Activated CD4-positive, alpha-beta T cell treated with anti-CD3 and anti-CD28 coated beads for 36 hours (primary cell): ENCODE measurements at regions of chr19 and their contacts with region 1.

Region 1: GRCh38 chr19:46661020-46661731 is at the start of gene DACT3:
- DNase-seq: peak; percentile 100
- ATAC-seq: peak; percentile 87
- H3K4me3 Mint-ChIP-seq: peak within 1 kb of the TSS; percentile 66
- H3K27ac Mint-ChIP-seq: peak within 1 kb of the TSS; percentile 62
- H3K4me1 Mint-ChIP-seq: peaks cover 28% of the 10 kb centered on the region
- H3K27me3 Mint-ChIP-seq: peaks cover 12% of the 10 kb centered on the region
- total RNA-seq, gene DACT3: 2.9 to 3.1 TPM

Region 2: DNA sequence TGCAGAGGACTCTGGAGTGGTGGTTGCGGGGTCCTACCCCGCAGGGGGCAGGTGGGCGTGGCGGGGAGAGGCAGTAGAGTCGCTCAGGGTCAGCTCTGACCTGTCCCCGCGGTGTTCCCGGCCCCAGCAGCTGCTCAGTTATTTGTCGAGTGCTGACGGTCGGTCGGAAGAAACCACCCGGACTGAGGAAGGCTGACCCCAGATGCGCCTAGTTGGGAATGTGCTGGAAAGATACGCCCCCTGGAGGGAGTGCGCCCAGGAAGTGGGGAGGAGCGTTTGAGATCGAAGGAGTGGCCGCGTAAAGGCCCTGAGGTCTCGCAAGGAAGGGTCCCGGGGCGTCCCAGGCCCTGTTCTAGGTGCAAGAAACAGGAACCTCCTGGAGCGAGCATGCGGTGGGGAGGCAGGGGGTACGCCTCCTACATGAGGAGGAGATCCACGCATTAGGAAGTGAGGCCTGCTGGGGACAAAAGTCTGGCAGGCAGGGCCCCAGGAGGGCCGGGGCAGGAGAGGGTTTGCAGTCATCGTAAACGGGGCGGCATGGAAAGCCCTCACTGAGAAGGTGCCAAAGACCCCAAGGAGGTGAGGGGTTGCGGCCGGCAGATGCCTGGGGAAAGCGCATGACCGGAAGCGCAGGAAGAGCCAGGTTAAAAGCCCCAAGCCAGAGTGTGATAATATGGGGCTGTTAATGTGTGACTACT is 257.0 kb before region 1 on chr19:
- CTCF ChIA-PET with region 1: no interaction called
- POLR2A ChIA-PET with region 1: no interaction called
- intact Hi-C with region 1: loop called in 1 of 2 experiments (anchors 5 kb)
- DNase-seq: no peak
- ATAC-seq: no peak
- H3K4me3 Mint-ChIP-seq: no peak overlapping the region
- H3K27ac Mint-ChIP-seq: no peak overlapping the region
- H3K4me1 Mint-ChIP-seq: peaks cover 17% of the 10 kb centered on the region
- H3K27me3 Mint-ChIP-seq: peaks cover 60% of the 10 kb centered on the region

Region 3: GRCh38 chr19:46600384-46601317 is 60.5 kb before region 1 on chr19:
- CTCF ChIA-PET with region 1: interaction called, 46 read pairs
- POLR2A ChIA-PET with region 1: interaction called, 11 read pairs
- intact Hi-C with region 1: loop called in 1 of 2 experiments (anchors 1 kb)
- DNase-seq: peak; percentile 99
- ATAC-seq: peak; percentile 86
- H3K4me3 Mint-ChIP-seq: peak overlapping the region; percentile 84
- H3K27ac Mint-ChIP-seq: peak overlapping the region; percentile 100
- H3K4me1 Mint-ChIP-seq: peaks cover 33% of the 10 kb centered on the region
- H3K27me3 Mint-ChIP-seq: no peaks in the 10 kb centered on the region

Region 4: GRCh38 chr19:46634045-46634655 is 27.0 kb before region 1 on chr19:
- CTCF ChIA-PET with region 1: interaction called, 28 read pairs
- POLR2A ChIA-PET with region 1: interaction called, 3 read pairs
- intact Hi-C with region 1: loop called (anchors 1 kb)
- DNase-seq: peak; percentile 99
- ATAC-seq: peak; percentile 63
- H3K4me3 Mint-ChIP-seq: peak overlapping the region; percentile 73
- H3K27ac Mint-ChIP-seq: peak overlapping the region; percentile 72
- H3K4me1 Mint-ChIP-seq: peaks cover 21% of the 10 kb centered on the region
- H3K27me3 Mint-ChIP-seq: no peaks in the 10 kb centered on the region

Region 5: DNA sequence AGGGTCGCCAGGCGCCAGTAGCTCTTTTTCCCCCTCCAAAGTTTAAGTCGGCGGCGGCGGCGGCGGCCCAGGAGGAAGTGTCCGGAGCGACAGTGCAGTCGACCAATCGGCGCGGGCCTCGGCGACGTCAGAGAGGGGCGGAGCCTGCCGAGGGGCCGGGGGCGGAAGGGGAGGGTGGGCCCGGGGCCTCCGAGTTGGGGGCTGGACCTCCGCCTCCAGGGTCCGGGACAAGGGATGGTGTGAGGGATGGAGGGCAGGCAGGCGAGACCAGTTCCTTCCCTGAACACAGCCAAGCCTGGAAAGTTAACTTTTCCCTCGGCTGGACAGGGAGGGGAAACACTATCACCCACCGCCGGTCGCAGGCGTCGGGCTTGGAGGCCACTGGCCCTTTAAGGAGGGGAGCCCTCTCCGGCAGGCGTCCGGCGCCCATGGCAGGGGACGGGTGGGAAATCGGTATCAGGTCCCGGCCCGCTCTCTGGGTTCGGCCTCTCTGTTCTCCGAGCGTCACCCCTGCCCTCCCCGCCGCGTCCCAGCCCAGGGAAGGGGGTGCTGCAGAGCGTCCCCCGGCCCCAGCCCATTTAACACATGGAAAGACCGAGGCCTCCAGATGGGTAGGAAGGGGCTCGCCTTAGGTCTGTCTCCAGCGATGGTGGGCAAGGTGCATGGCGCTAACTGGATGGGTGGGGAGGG is 56.0 kb after region 1 on chr19 and contains the start of gene PRKD2:
- CTCF ChIA-PET with region 1: interaction called, 8 read pairs
- POLR2A ChIA-PET with region 1: no interaction called
- intact Hi-C with region 1: loop called in 1 of 2 experiments (anchors 1 kb)
- DNase-seq: peak; percentile 95
- ATAC-seq: peak; percentile 66
- H3K4me3 Mint-ChIP-seq: peak within 1 kb of the TSS; percentile 94
- H3K27ac Mint-ChIP-seq: peak within 1 kb of the TSS; percentile 95
- H3K4me1 Mint-ChIP-seq: peaks cover 40% of the 10 kb centered on the region
- H3K27me3 Mint-ChIP-seq: no peaks in the 10 kb centered on the region
- total RNA-seq, gene PRKD2: 76.0 to 78.3 TPM

Region 6: GRCh38 chr19:47256688-47257443 is 595.7 kb after region 1 on chr19:
- CTCF ChIA-PET with region 1: no interaction called
- POLR2A ChIA-PET with region 1: no interaction called
- intact Hi-C with region 1: loop called in 1 of 2 experiments (anchors 1 kb)
- DNase-seq: peak; percentile 100
- ATAC-seq: peak; percentile 86
- H3K4me3 Mint-ChIP-seq: peak overlapping the region; percentile 90
- H3K27ac Mint-ChIP-seq: peak overlapping the region; percentile 93
- H3K4me1 Mint-ChIP-seq: peaks cover 31% of the 10 kb centered on the region
- H3K27me3 Mint-ChIP-seq: no peaks in the 10 kb centered on the region